ENCODE measurements at regions of chr6 and their contacts with region 1.

Region 1: GRCh38 chr6:152124429-152125074 is 317.1 kb downstream of the ESR1 start:
- DNase-seq: peak; percentile 45
- H3K4me3 ChIP-seq: no peak overlapping the region
- H3K27ac ChIP-seq: no peak overlapping the region
- H3K27me3 ChIP-seq: no peaks in the 10 kb centered on the region
- CTCF ChIP-seq: peak; percentile 85

Region 2: DNA sequence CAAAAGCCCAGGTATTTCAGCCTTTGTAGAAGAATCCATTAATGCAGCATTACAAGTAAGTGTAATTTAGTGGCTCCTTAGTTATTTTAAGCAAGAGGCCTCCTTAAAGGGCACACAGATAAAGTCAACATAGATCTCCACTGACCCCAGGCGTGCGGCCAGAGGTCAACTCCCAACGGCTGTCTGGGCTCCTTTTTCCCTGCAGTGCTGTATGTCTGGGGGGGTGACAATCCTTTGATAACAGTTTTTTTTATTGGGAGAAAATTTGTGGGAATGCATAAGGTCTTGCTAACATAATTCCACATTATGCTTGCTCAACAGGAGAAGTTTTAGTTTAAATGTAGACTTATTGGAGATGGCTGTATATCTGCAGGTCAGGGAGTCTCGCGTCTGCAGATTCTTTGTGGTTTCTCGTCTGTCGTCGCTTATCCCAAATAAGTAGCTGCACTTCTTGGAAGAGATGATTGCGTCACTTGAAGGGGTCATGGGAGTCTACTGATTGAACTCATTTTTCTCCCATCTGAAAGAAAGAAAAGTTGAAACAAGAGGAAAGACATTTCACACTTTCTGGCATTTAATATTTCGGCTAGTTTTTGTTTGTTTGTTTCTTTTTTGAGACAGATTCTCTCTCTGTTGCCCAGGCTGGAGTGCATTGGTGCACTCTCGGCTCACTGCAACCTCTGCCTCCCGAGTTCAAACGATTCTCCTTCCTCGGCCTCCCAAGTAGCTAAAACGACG is 1036.5 kb before region 1 on chr6:
- CTCF ChIA-PET with region 1: no interaction called
- POLR2A ChIA-PET with region 1: no interaction called
- DNase-seq: no peak
- H3K4me3 ChIP-seq: no peak overlapping the region
- H3K27ac ChIP-seq: no peak overlapping the region
- H3K27me3 ChIP-seq: no peaks in the 10 kb centered on the region
- CTCF ChIP-seq: no peak

Region 3: GRCh38 chr6:152094992-152095592 is 29.5 kb before region 1 on chr6:
- CTCF ChIA-PET with region 1: interaction called, 41 read pairs
- POLR2A ChIA-PET with region 1: no interaction called
- DNase-seq: peak; percentile 98
- H3K4me3 ChIP-seq: no peak overlapping the region
- H3K27ac ChIP-seq: peak overlapping the region; percentile 89
- H3K27me3 ChIP-seq: no peaks in the 10 kb centered on the region
- CTCF ChIP-seq: no peak

Region 4: GRCh38 chr6:152100183-152100618 is 24.4 kb before region 1 on chr6:
- CTCF ChIA-PET with region 1: interaction called, 41 read pairs
- POLR2A ChIA-PET with region 1: no interaction called
- DNase-seq: no peak
- H3K4me3 ChIP-seq: no peak overlapping the region
- H3K27ac ChIP-seq: peak overlapping the region; percentile 34
- H3K27me3 ChIP-seq: no peaks in the 10 kb centered on the region
- CTCF ChIP-seq: no peak

Region 5: GRCh38 chr6:152110886-152111820 is 13.4 kb before region 1 on chr6:
- CTCF ChIA-PET with region 1: interaction called, 18 read pairs
- POLR2A ChIA-PET with region 1: no interaction called
- DNase-seq: no peak
- H3K4me3 ChIP-seq: no peak overlapping the region
- H3K27ac ChIP-seq: no peak overlapping the region
- H3K27me3 ChIP-seq: no peaks in the 10 kb centered on the region
- CTCF ChIP-seq: no peak

Region 6: DNA sequence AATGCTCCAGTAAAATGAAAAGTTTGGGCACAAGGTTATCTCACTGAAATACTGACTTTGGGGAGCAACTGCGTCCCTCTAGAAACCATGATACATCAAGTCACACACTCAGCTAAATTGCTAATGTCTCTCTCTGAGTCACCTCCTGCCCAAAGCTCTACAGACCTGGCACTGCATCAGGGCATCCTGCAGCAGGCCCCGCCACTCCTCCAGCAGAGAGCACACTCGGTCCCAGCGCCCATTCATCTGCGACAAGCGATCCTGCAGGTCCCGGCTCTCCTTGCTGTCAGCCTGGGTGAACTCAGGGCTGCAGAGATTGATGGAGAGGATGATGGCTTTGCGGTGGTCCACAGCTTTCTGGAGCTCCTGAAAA is 11.9 kb after region 1 on chr6:
- CTCF ChIA-PET with region 1: interaction called, 25 read pairs
- POLR2A ChIA-PET with region 1: no interaction called
- DNase-seq: no peak
- H3K4me3 ChIP-seq: no peak overlapping the region
- H3K27ac ChIP-seq: no peak overlapping the region
- H3K27me3 ChIP-seq: no peaks in the 10 kb centered on the region
- CTCF ChIP-seq: no peak

Region 7: DNA sequence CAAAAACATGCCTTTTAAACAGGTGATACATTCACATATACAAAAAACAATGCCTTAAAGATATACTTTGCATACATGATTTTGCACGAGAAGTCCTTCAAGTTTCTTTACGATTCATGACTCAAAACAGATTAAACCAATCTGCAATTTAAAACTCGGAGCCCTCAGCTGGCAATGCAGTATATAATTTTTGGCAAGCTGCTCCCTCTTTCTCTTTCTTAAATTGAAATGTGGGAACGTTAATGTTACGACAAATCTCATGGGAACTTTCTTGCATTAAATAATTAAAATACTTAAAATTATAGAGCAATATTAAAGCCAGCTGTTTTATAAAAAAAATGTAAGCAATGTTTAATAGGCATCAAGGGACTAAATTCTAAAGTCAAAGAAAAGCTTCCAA is 17.6 kb after region 1 on chr6:
- CTCF ChIA-PET with region 1: interaction called, 25 read pairs
- POLR2A ChIA-PET with region 1: interaction called, 9 read pairs
- DNase-seq: no peak
- H3K4me3 ChIP-seq: no peak overlapping the region
- H3K27ac ChIP-seq: no peak overlapping the region
- H3K27me3 ChIP-seq: no peaks in the 10 kb centered on the region
- CTCF ChIP-seq: no peak

Region 8: DNA sequence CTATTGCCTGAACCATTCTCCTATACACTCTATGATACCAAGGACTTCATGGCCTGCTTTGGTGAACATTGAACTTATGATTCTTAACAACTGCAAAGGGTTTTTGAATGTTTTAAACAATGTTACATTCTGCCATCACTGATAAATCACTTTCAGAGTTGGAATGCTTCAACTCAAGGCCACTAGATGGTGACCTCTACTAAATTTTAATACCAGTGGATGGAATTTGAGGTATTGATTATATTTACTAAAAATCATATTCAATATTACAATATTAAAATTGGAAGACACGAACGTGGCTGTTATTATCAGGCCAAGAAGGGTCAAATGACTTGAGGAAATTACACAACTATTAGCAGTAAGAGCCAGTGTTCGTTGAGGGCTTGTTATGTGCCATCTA is 591.8 kb after region 1 on chr6:
- CTCF ChIA-PET with region 1: no interaction called
- POLR2A ChIA-PET with region 1: no interaction called
- DNase-seq: no peak
- H3K4me3 ChIP-seq: no peak overlapping the region
- H3K27ac ChIP-seq: no peak overlapping the region
- H3K27me3 ChIP-seq: no peaks in the 10 kb centered on the region
- CTCF ChIP-seq: no peak